ENCODE measurements at regions of chr1 and their contacts with region 1.

Region 1: DNA sequence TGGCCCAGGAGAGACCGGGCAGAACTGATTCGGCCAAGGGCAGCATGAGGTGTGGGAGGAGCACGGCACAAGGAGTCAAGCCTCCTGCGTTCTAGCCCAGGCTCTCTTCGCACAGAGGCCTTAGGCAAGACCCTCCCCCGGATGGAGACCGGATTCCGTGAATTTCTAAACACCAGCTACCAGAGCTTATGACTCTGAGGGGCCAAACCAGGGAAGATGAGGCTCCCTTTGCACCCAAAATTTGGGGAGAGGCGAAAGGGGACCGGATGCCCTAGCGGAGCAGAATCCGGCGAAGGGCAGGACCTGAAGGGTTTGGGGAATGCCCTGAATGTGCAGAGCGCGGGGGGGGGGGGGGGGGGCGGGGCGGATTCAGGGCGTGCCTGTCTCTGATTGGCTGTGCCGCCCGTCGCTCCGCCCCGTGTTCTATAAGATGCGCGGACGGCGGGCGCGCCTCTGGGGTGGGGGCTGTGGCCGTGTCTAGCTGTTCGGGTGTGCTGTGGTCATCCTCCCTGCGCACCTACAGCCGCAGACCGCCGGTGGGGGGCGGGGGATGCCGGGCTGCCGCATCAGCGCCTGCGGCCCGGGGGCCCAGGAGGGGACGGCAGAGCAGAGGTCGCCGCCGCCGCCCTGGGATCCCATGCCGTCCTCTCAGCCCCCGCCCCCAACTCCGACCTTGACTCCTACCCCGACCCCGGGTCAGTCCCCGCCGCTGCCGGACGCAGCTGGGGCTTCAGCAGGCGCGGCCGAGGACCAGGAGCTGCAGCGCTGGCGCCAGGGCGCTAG is at the start of gene TRNP1:
- DNase-seq: peak; percentile 86
- ATAC-seq: peak; percentile 58
- H3K4me3 Mint-ChIP-seq: peak within 1 kb of the TSS; percentile 81
- H3K27ac Mint-ChIP-seq: peak within 1 kb of the TSS; percentile 97
- H3K4me1 Mint-ChIP-seq: peaks cover 57% of the 10 kb centered on the region
- H3K27me3 Mint-ChIP-seq: peaks cover 26% of the 10 kb centered on the region
- CTCF ChIP-seq: no peak
- total RNA-seq, gene TRNP1: 37.6 to 51.4 TPM (median 49.4 TPM) in 3 replicates

Region 2: GRCh38 chr1:26959722-26960615 is 33.5 kb before region 1 on chr1 and contains the start of gene KDF1:
- CTCF ChIA-PET with region 1: interaction called, 34 read pairs
- POLR2A ChIA-PET with region 1: interaction called, 3 read pairs
- DNase-seq: peak; percentile 95
- ATAC-seq: peak; percentile 98
- H3K4me3 Mint-ChIP-seq: peak within 1 kb of the TSS; percentile 80
- H3K27ac Mint-ChIP-seq: peak within 1 kb of the TSS; percentile 86
- H3K4me1 Mint-ChIP-seq: peaks cover 16% of the 10 kb centered on the region
- H3K27me3 Mint-ChIP-seq: no peaks in the 10 kb centered on the region; the same call in 1 of the 2 replicates
- CTCF ChIP-seq: no peak; the same call in 1 of the 2 replicates
- total RNA-seq, gene KDF1: 18.9 to 19.8 TPM (median 19.0 TPM) in 3 replicates

Region 3: DNA sequence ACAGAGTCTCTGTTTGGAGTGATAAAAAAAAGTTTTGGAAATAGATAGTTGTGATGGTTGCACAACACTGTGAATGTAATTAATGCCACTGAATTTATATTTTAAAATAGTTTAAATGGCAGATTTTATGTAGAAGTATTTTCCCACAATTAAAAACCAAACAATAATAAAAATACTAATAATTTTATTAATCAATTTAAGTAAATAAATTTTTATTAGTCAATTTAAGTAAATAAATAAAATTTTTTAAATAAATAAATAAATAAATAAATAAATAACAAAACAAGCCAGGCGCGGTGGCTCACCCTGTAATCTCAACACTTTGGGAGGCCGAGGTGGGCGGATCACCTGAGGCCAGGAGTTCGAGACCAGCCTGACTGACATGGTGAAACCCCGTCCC is 28.2 kb before region 1 on chr1:
- CTCF ChIA-PET with region 1: interaction called, 73 read pairs
- POLR2A ChIA-PET with region 1: interaction called, 13 read pairs
- DNase-seq: no peak
- ATAC-seq: no peak
- H3K4me3 Mint-ChIP-seq: no peak overlapping the region
- H3K27ac Mint-ChIP-seq: no peak overlapping the region
- H3K4me1 Mint-ChIP-seq: peaks cover 18% of the 10 kb centered on the region
- H3K27me3 Mint-ChIP-seq: peaks cover 5% of the 10 kb centered on the region
- CTCF ChIP-seq: no peak

Region 4: GRCh38 chr1:27010989-27011764 is 17.7 kb after region 1 on chr1:
- CTCF ChIA-PET with region 1: interaction called, 126 read pairs
- POLR2A ChIA-PET with region 1: interaction called, 83 read pairs
- DNase-seq: peak; percentile 92
- ATAC-seq: peak; percentile 16
- H3K4me3 Mint-ChIP-seq: peak overlapping the region; percentile 88
- H3K27ac Mint-ChIP-seq: peak overlapping the region; percentile 92
- H3K4me1 Mint-ChIP-seq: peaks cover 57% of the 10 kb centered on the region
- H3K27me3 Mint-ChIP-seq: no peaks in the 10 kb centered on the region
- CTCF ChIP-seq: no peak

Region 5: DNA sequence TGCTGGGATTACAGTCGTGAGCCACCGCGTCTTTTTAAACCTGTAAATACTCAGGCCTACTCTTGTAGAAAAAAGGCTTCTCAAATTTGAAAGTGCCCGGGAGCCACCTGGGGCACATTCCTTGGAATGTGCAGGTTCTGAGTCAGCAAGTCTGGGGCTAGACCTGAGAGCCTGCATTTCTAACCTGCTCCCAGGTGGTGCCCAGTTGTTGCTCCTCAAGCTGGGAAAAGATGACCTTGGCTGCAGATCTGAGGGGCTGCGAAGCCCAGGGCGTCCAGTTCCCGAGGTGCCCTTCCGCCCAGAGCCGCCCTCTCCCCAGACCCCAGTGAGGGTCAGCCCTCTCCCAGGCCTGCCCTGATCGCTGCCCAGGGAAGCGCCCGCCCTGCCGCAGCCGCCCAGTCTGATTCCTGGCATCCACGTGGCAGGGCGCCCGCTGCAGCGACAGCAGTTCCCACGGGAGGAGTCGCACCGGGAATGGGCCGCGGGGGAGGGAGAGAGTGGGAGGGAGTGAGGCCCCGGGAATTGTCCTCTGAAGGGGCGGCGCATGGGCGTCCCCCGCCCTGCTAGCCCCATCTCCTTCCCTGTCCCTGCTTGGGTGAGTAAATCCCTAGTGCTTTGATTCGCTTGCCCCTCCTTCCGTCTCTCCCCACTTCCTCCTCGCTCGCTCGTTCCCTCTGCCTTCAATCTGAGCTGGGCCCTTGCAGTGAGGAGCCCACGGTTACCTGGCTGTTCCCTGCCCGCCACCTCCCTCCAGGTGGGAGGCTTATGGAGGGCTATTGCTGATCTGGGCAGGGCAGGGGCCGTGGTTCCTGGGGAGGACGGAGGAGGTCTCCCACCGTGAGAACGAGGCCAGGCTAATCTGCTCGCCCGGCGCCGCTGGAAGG is 38.0 kb after region 1 on chr1:
- CTCF ChIA-PET with region 1: interaction called, 11 read pairs
- POLR2A ChIA-PET with region 1: interaction called, 27 read pairs
- DNase-seq: peak; percentile 65
- ATAC-seq: peak; percentile 64
- H3K4me3 Mint-ChIP-seq: peak overlapping the region; percentile 49
- H3K27ac Mint-ChIP-seq: peak overlapping the region; percentile 84
- H3K4me1 Mint-ChIP-seq: peaks cover 38% of the 10 kb centered on the region
- H3K27me3 Mint-ChIP-seq: no peaks in the 10 kb centered on the region
- CTCF ChIP-seq: no peak

Region 6: DNA sequence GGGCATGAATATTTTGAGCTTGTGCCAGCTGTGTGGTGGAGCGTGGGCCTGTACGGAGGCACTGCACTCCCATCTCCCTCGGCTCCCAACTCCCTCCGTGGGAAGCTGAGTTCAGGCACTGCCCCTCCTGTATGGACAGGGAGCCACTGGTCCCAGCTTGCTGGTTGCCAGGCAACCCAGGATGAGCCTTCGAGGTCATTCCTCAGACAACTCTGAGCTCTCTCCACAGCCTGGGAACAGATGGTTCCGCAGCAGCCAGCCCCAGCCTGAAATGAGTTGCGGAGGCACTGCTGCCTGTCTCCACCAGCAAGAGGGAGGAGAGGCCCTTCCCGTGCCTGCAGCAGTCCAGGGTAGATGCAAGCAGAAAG is 77.6 kb after region 1 on chr1:
- CTCF ChIA-PET with region 1: interaction called, 18 read pairs
- POLR2A ChIA-PET with region 1: interaction called, 4 read pairs
- DNase-seq: peak; percentile 49
- ATAC-seq: peak; percentile 63
- H3K4me3 Mint-ChIP-seq: no peak overlapping the region
- H3K27ac Mint-ChIP-seq: no peak overlapping the region
- H3K4me1 Mint-ChIP-seq: peaks cover 15% of the 10 kb centered on the region
- H3K27me3 Mint-ChIP-seq: no peaks in the 10 kb centered on the region
- CTCF ChIP-seq: no peak

Region 7: DNA sequence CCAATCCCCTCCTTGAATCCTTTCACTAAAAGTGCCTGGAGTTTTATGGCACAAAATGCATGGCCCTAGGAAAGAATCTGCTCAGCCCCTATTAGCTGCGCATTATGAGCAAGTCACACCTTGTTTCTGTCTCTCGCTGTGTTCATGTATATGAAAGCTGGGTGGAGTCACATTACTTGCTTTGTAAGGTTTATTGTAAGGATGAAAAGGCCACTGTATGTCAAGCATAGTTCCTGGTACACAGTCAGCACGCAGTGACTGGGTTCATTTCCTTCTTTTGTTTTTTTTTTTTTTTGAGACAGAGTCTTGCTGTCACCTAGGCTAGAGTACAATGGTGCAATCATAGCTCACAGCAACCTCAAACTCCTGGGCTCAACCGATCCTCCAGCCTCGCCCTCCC is 168.2 kb after region 1 on chr1:
- CTCF ChIA-PET with region 1: no interaction called
- POLR2A ChIA-PET with region 1: no interaction called
- DNase-seq: no peak
- ATAC-seq: no peak
- H3K4me3 Mint-ChIP-seq: no peak overlapping the region
- H3K27ac Mint-ChIP-seq: no peak overlapping the region
- H3K4me1 Mint-ChIP-seq: no peaks in the 10 kb centered on the region
- H3K27me3 Mint-ChIP-seq: no peaks in the 10 kb centered on the region
- CTCF ChIP-seq: no peak

Region 8: GRCh38 chr1:27201295-27201694 is 207.9 kb after region 1 on chr1:
- CTCF ChIA-PET with region 1: no interaction called
- POLR2A ChIA-PET with region 1: no interaction called
- DNase-seq: no peak
- ATAC-seq: no peak
- H3K4me3 Mint-ChIP-seq: no peak overlapping the region
- H3K27ac Mint-ChIP-seq: no peak overlapping the region
- H3K4me1 Mint-ChIP-seq: no peaks in the 10 kb centered on the region
- H3K27me3 Mint-ChIP-seq: peaks cover 8% of the 10 kb centered on the region
- CTCF ChIP-seq: no peak